PC-3 (cell line): ENCODE measurements at regions of chr2 and their contacts with region 1.

Region 1: GRCh38 chr2:202178342-202178958 is 59.9 kb downstream of the SUMO1 start:
- DNase-seq: peak; percentile 88
- ATAC-seq: peak; percentile 88
- H3K4me3 ChIP-seq: no peak overlapping the region
- H3K27ac ChIP-seq: no peak overlapping the region
- H3K4me1 ChIP-seq: no peaks in the 10 kb centered on the region
- H3K27me3 ChIP-seq: no peaks in the 10 kb centered on the region
- CTCF ChIP-seq: peak; percentile 92

Region 2: GRCh38 chr2:201754717-201755415 is 423.6 kb before region 1 on chr2:
- CTCF ChIA-PET with region 1: no interaction called
- POLR2A ChIA-PET with region 1: no interaction called
- intact Hi-C with region 1: loop called (anchors 1 kb)
- DNase-seq: peak; percentile 72
- ATAC-seq: peak; percentile 96
- H3K4me3 ChIP-seq: no peak overlapping the region
- H3K27ac ChIP-seq: no peak overlapping the region
- H3K4me1 ChIP-seq: peaks cover 10% of the 10 kb centered on the region
- H3K27me3 ChIP-seq: no peaks in the 10 kb centered on the region
- CTCF ChIP-seq: no peak

Region 3: GRCh38 chr2:201795607-201796477 is 382.6 kb before region 1 on chr2:
- CTCF ChIA-PET with region 1: no interaction called
- POLR2A ChIA-PET with region 1: no interaction called
- intact Hi-C with region 1: loop called (anchors 1 kb)
- DNase-seq: peak; percentile 70
- ATAC-seq: peak; percentile 20; the same call in 1 of the 2 replicates
- H3K4me3 ChIP-seq: no peak overlapping the region
- H3K27ac ChIP-seq: peak overlapping the region; percentile 96
- H3K4me1 ChIP-seq: peaks cover 28% of the 10 kb centered on the region
- H3K27me3 ChIP-seq: no peaks in the 10 kb centered on the region
- CTCF ChIP-seq: peak; percentile 85

Region 4: DNA sequence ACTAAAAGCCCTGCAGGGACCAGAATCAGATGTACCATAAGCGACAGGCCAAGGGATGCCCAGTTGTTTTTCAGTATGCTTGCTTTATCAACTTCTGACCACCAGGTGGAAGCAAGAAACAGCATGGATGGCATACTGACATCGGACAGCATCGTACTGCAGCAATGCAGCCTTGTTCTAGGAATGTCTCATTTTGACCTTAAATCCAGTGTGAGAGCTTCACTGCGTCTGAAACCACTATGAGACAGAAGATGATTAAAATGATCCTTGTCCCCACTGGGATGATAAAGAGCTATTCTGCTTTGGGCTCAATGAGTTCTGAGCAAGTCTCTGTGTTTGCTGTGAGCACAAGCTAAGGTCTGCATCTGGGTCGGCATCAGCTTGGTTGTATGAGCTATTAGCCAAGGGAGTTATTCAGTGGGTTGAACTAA is 317.8 kb before region 1 on chr2:
- CTCF ChIA-PET with region 1: interaction called, 5 read pairs
- POLR2A ChIA-PET with region 1: no interaction called
- intact Hi-C with region 1: loop called (anchors 1 kb)
- DNase-seq: peak; percentile 82
- ATAC-seq: peak; percentile 98
- H3K4me3 ChIP-seq: no peak overlapping the region
- H3K27ac ChIP-seq: no peak overlapping the region
- H3K4me1 ChIP-seq: no peaks in the 10 kb centered on the region
- H3K27me3 ChIP-seq: no peaks in the 10 kb centered on the region
- CTCF ChIP-seq: peak; percentile 88

Region 5: GRCh38 chr2:201964631-201965206 is 213.7 kb before region 1 on chr2:
- CTCF ChIA-PET with region 1: no interaction called
- POLR2A ChIA-PET with region 1: no interaction called
- intact Hi-C with region 1: loop called (anchors 5 kb)
- DNase-seq: no peak
- ATAC-seq: no peak
- H3K4me3 ChIP-seq: no peak overlapping the region
- H3K27ac ChIP-seq: no peak overlapping the region
- H3K4me1 ChIP-seq: no peaks in the 10 kb centered on the region; the same call in 1 of the 2 replicates
- H3K27me3 ChIP-seq: no peaks in the 10 kb centered on the region
- CTCF ChIP-seq: no peak

Region 6: DNA sequence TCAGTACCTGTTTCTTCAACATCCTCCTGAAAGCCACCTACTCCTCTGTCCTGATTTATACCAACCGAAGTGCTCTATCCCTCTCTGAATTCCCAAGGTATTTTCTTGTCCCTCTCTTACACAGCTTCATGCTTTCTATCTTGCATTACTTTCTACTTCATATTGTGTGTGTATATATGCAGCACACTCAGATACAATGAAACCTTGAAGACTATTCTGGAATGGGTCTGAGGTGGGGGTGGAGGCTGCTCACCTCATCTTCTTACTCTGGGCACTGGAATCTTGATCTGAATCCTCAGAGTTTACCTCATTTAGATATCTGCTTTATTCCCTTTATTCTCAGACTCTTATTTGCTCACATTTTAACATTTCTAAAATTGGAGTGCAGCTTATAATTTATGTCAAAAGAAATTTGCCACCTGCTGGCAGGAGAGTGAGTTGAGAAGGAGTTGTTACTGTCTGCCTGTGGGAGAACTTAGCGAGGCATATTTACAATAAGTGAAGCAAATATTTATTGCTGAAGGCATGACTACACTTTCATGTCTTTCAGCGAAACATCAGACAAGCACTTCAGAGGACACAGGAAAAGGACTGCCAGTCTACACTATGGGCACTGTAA is 121.9 kb before region 1 on chr2:
- CTCF ChIA-PET with region 1: interaction called, 5 read pairs
- POLR2A ChIA-PET with region 1: no interaction called
- intact Hi-C with region 1: loop called (anchors 5 kb)
- DNase-seq: peak; percentile 57
- ATAC-seq: peak; percentile 77
- H3K4me3 ChIP-seq: no peak overlapping the region
- H3K27ac ChIP-seq: no peak overlapping the region
- H3K4me1 ChIP-seq: no peaks in the 10 kb centered on the region
- H3K27me3 ChIP-seq: peaks cover 18% of the 10 kb centered on the region; the same call in 1 of the 2 replicates
- CTCF ChIP-seq: peak; percentile 80

Region 7: DNA sequence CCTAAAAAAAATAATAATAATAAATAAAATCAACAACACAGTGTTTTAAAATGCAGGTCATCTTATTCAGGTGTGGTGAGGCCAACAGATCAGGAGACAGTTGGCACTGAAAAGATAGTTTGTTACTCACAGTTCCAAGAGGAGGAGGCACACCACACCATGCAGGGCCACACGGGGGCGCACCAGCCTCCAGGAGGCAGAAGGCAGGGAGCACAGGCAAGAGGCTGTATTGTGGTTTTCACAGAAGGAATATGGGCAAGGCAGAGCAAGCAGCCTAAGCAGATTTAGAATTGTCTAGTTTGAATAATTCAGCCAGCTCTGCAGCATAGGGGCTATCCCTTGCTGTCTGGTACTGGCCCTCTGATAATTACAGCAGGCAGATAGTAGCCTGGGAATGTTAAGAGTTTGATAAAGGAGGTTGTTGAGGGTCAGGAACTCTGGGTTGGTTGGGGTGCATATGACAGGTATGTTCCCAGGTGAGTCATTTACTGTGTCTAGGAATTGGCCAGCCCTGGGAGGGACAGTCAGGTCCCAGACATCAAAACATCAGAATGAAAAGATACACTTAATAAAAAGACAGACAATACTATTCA is 74.1 kb before region 1 on chr2:
- CTCF ChIA-PET with region 1: no interaction called
- POLR2A ChIA-PET with region 1: no interaction called
- intact Hi-C with region 1: loop called (anchors 1 kb)
- DNase-seq: peak; percentile 65
- ATAC-seq: peak; percentile 75
- H3K4me3 ChIP-seq: no peak overlapping the region
- H3K27ac ChIP-seq: no peak overlapping the region
- H3K4me1 ChIP-seq: no peaks in the 10 kb centered on the region
- H3K27me3 ChIP-seq: no peaks in the 10 kb centered on the region
- CTCF ChIP-seq: peak; percentile 84